Activated T-helper 1 cell treated with anti-CD3 and anti-CD28 coated beads, Interleukin-12 subunit alpha, Interleukin-12 subunit beta, Interleukin-2, Interleukin-4 antibody, amounts not matched to agents 30 ng/mL and 10 ng/mL and 1 ng/mL, durations not matched to agents 14 hours and 24 hours and 36 hours (primary cell): ENCODE measurements at regions of chr3 and their contacts with region 1.

Region 1: GRCh38 chr3:197510642-197511018 is 45.1 kb downstream of the BDH1 start:
- DNase-seq: no peak
- H3K4me3 Mint-ChIP-seq: no peak overlapping the region
- H3K27ac Mint-ChIP-seq: no peak overlapping the region
- H3K4me1 Mint-ChIP-seq: peaks cover 5% of the 10 kb centered on the region
- H3K27me3 Mint-ChIP-seq: no peaks in the 10 kb centered on the region

Region 2: DNA sequence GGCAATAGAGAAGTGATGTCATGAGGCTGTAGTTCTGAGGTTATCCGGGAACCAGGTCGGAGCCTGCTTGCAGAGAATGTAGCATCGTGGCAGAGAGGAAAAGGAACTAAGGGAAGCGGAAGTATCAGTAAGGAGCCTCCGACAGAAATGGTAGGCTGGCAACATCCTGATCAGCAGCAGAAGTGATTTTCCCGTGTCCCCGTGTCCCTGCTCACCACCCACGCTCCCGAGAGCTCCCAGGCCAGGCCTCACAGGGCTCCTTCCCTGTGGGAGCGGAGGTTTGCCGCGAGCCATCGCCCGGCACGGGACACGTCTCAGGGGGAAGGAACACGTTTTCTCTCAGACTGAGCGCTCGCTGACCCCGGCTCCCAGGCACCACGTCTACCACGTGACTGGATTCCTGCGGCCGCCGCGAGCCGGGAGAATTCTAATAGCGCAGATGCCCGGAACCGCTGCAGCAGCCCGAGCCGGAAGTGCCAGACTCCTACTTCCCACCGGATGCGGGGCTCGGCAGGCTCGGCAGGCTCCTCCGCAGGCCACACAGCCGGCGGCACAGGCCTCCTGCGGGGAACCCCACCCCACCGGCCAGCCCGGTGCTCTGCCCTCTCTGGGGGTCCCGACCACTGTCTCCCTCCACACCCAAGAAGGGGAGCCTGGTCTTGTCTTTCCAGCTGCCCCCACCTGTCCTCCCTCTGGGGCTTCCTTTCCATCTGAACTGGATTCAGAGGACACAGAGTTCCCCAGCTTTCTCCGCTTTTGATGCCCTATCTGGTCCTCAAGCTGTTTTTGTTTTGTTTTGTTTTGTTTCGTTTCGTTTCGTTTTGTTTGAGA is 54.2 kb before region 1 on chr3:
- intact Hi-C with region 1: loop called (anchors 1 kb)
- DNase-seq: peak; percentile 36
- H3K4me3 Mint-ChIP-seq: peak overlapping the region; percentile 87
- H3K27ac Mint-ChIP-seq: peak overlapping the region; percentile 88
- H3K4me1 Mint-ChIP-seq: peaks cover 22% of the 10 kb centered on the region
- H3K27me3 Mint-ChIP-seq: peaks cover 22% of the 10 kb centered on the region